Activated CD8-positive, alpha-beta T cell treated with anti-CD3 and anti-CD28 coated beads for 36 hours (primary cell): ENCODE measurements at regions of chr22 and their contacts with region 1.

Region 1: GRCh38 chr22:26690654-26691376 is 33.4 kb downstream of the MIAT start:
- DNase-seq: no peak
- ATAC-seq: no peak
- H3K4me3 Mint-ChIP-seq: no peak overlapping the region
- H3K27ac Mint-ChIP-seq: no peak overlapping the region
- H3K4me1 Mint-ChIP-seq: peaks cover 32% of the 10 kb centered on the region
- H3K27me3 Mint-ChIP-seq: no peaks in the 10 kb centered on the region
- CTCF ChIP-seq: no peak

Region 2: DNA sequence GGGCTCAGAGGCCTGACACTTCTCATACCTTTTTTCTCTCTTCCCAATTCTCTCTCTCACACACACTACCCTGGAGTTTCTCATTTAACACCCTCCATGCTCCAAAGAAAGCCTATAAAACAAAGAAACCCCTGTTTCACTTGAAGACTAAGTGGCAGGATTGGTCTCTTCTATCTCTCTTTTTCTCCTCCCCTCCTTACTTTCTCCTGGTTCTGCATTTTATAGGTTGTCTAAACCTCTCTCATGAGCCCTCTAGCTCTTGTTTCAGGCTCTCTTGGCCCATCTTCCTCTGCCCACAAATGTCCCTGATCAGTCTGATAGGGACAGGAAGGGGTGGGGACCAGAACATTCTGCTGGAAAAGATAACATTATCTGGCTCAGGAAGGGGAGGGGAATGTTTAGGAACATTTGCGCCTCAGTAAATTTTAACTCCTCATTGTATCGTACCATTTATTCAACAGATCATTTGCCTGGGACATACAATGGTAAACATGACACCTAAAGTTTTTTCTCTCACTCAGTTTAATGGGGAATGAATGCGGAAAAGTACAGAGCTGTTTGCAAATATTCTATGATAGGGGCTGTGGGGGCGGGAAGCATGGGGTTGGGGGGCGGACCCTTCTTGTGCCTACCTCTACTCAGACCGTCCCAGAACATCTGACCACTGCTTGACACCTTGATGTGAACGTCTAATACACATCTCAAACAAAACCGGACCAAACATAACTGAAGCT is 58.2 kb before region 1 on chr22:
- CTCF ChIA-PET with region 1: no interaction called
- POLR2A ChIA-PET with region 1: no interaction called
- intact Hi-C with region 1: no loop called
- DNase-seq: no peak
- ATAC-seq: no peak
- H3K4me3 Mint-ChIP-seq: no peak overlapping the region
- H3K27ac Mint-ChIP-seq: no peak overlapping the region
- H3K4me1 Mint-ChIP-seq: peaks cover 15% of the 10 kb centered on the region
- H3K27me3 Mint-ChIP-seq: no peaks in the 10 kb centered on the region
- CTCF ChIP-seq: no peak

Region 3: DNA sequence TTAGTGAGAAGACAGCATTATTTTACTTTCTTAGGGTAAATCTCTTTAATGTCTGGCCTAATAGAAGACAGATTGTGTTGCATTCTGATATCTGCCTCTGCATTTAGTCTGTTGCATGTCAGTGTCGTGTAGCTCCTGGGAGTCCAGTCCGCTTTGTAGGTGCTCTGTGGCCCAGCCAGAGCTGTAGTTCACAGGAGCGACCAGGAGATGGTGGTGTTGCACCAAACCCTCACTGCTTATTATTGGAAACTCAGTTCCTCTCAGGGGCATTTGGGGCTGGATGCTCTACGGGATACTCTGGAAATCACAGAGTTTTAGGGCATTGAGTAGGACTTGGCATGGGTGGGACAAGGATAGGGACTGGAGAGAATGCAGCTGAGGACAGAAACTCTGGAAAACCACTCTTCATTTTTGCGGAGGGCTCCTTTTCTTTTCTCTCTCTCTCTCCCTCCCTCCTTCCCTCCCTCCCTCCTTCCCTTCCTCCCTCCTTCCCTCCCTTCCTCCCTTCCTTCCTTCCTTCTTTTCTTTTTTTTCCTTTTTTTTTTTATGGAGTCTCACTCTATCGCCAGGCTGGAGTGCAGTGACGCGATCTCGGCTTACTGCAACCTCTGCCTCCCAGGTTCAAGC is 11.7 kb before region 1 on chr22:
- CTCF ChIA-PET with region 1: interaction called, 13 read pairs
- POLR2A ChIA-PET with region 1: interaction called, 3 read pairs
- intact Hi-C with region 1: no loop called
- DNase-seq: peak; percentile 84
- ATAC-seq: peak; percentile 93
- H3K4me3 Mint-ChIP-seq: no peak overlapping the region
- H3K27ac Mint-ChIP-seq: peak overlapping the region; percentile 74
- H3K4me1 Mint-ChIP-seq: peaks cover 54% of the 10 kb centered on the region
- H3K27me3 Mint-ChIP-seq: no peaks in the 10 kb centered on the region
- CTCF ChIP-seq: peak; percentile 95